PC-9 (cell line): ENCODE measurements at regions of chr20 and their contacts with region 1.

Region 1: DNA sequence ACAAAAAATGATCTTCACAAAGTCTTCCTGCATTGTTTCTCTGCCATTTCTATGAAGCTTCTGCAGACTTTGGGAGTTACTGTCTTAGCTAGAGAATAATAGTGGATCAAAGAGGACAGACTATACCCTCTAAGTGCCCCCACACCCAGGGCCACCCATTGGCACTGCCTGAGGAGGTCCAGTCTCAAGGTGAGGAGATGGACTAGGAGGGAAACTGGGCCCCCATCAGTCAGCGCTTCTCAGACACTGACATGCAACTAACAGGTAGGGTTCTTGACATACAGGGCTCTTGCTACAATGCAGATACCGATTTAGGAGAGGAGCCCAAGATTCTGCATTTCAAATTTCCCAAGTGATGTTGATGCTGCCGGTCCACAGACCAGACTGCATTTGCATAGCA is 24.3 kb downstream of the PCNA start:
- DNase-seq: no peak
- H3K4me3 ChIP-seq: no peak overlapping the region
- H3K27ac ChIP-seq: no peak overlapping the region
- H3K4me1 ChIP-seq: 0 out of 2 replicates have a peak, but pooled peaks cover 3% of the 10 kb centered on the region
- H3K27me3 ChIP-seq: no peaks in the 10 kb centered on the region
- CTCF ChIP-seq: no peak

Region 2: DNA sequence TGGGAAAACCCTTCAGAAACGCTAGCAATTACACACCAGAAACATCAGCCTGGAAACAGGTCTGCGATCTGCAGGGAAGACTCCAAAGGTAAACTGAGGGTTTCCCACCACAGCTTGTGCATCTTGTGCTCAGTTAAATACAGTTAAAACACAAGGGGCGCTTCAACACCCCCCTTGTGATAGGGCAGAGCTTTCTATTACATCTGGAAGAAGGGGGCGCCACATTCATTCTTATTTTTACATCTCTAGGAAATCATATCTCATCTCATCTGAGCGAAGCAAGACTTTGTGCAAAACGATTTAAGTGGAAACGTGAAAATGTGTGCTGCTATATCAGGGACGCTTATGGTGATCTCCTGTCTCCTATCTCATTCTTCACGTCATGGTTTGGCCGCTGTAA is 315.2 kb before region 1 on chr20:
- CTCF ChIA-PET with region 1: no interaction called
- POLR2A ChIA-PET with region 1: interaction called, 14 read pairs
- intact Hi-C with region 1: no loop called
- DNase-seq: no peak
- H3K4me3 ChIP-seq: no peak overlapping the region
- H3K27ac ChIP-seq: no peak overlapping the region
- H3K4me1 ChIP-seq: no peaks in the 10 kb centered on the region
- H3K27me3 ChIP-seq: no peaks in the 10 kb centered on the region
- CTCF ChIP-seq: no peak

Region 3: DNA sequence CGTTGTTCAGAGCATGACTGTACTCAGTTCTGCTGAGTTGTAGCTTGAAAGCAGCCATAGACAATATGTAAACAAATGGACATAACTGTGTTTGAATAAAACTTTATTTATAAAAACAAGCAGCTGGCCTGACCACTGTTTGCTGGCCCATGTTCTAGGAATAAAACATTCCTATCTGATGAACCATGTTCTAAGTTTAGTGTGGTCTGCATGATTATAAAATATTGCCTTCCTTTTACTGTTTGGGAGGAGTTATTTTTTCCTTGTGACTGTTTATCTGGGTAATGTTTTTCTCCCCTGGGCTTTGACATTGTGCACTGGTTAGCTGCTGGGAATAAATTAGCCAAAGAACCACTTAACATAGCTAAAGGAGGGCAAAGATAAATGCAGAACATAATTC is 86.5 kb after region 1 on chr20:
- CTCF ChIA-PET with region 1: no interaction called
- POLR2A ChIA-PET with region 1: no interaction called
- intact Hi-C with region 1: no loop called
- DNase-seq: no peak
- H3K4me3 ChIP-seq: no peak overlapping the region
- H3K27ac ChIP-seq: no peak overlapping the region
- H3K4me1 ChIP-seq: no peaks in the 10 kb centered on the region
- H3K27me3 ChIP-seq: no peaks in the 10 kb centered on the region
- CTCF ChIP-seq: no peak

Region 4: GRCh38 chr20:5205348-5206210 is 110.1 kb after region 1 on chr20:
- CTCF ChIA-PET with region 1: no interaction called
- POLR2A ChIA-PET with region 1: no interaction called
- intact Hi-C with region 1: no loop called
- DNase-seq: peak; percentile 46 to 68
- H3K4me3 ChIP-seq: no peak overlapping the region
- H3K27ac ChIP-seq: no peak overlapping the region
- H3K4me1 ChIP-seq: no peaks in the 10 kb centered on the region
- H3K27me3 ChIP-seq: no peaks in the 10 kb centered on the region
- CTCF ChIP-seq: peak; percentile 89